ENCODE measurements at regions of chr4 and their contacts with region 1.

Region 1: DNA sequence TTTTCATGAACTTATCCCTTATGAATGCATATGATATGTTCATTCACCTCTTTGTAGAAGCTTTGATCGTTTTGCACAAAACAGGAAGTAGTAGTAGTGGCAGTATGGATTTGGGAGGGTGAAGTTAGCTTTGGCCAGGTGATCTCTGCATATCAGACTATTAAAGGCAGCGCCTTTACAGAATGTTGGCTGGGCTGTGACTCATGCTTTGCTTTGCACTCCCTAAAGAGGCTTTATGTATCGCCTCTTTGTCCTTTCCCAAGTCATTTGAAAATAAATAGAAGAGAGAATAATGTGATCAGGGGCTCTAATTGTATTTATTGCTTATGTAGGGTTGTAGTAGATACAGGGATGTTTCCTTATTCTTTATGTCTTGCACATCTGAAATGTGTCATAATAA is 50.4 kb downstream of the SHROOM3 start:
- DNase-seq: peak; percentile 27
- H3K4me3 Mint-ChIP-seq: no peak overlapping the region
- H3K27ac Mint-ChIP-seq: peak overlapping the region; percentile 54
- H3K4me1 Mint-ChIP-seq: peaks cover 40% of the 10 kb centered on the region
- H3K27me3 Mint-ChIP-seq: no peaks in the 10 kb centered on the region
- CTCF ChIP-seq: no peak

Region 2: GRCh38 chr4:76449833-76450232 is 35.6 kb before region 1 on chr4:
- CTCF ChIA-PET with region 1: no interaction called
- intact Hi-C with region 1: loop called (anchors 5 kb)
- DNase-seq: no peak
- H3K4me3 Mint-ChIP-seq: peak overlapping the region; percentile 32
- H3K27ac Mint-ChIP-seq: peak overlapping the region; percentile 56
- H3K4me1 Mint-ChIP-seq: peaks cover 50% of the 10 kb centered on the region
- H3K27me3 Mint-ChIP-seq: no peaks in the 10 kb centered on the region
- CTCF ChIP-seq: no peak

Region 3: GRCh38 chr4:76969941-76970529 is 484.6 kb after region 1 on chr4:
- CTCF ChIA-PET with region 1: no interaction called
- intact Hi-C with region 1: no loop called
- DNase-seq: no peak
- H3K4me3 Mint-ChIP-seq: no peak overlapping the region
- H3K27ac Mint-ChIP-seq: no peak overlapping the region
- H3K4me1 Mint-ChIP-seq: no peaks in the 10 kb centered on the region
- H3K27me3 Mint-ChIP-seq: no peaks in the 10 kb centered on the region
- CTCF ChIP-seq: no peak

Measured in Calu3 (cell line).